Activated CD4-positive, alpha-beta T cell treated with anti-CD3 and anti-CD28 coated beads for 36 hours (primary cell): ENCODE measurements at regions of chr1 and their contacts with region 1.

Region 1: GRCh38 chr1:8423650-8424538 is 106.0 kb downstream of the SLC45A1 start:
- DNase-seq: peak; percentile 77
- ATAC-seq: peak; percentile 66
- H3K4me3 Mint-ChIP-seq: peak overlapping the region; percentile 84
- H3K27ac Mint-ChIP-seq: peak overlapping the region; percentile 97
- H3K4me1 Mint-ChIP-seq: peaks cover 42% of the 10 kb centered on the region
- H3K27me3 Mint-ChIP-seq: no peaks in the 10 kb centered on the region

Region 2: GRCh38 chr1:8389981-8390535 is 33.8 kb before region 1 on chr1:
- CTCF ChIA-PET with region 1: interaction called, 4 read pairs
- POLR2A ChIA-PET with region 1: no interaction called
- intact Hi-C with region 1: loop called in 1 of 2 experiments (anchors 5 kb)
- DNase-seq: peak; percentile 69
- ATAC-seq: peak; percentile 91
- H3K4me3 Mint-ChIP-seq: no peak overlapping the region
- H3K27ac Mint-ChIP-seq: peak overlapping the region; percentile 58
- H3K4me1 Mint-ChIP-seq: peaks cover 81% of the 10 kb centered on the region
- H3K27me3 Mint-ChIP-seq: no peaks in the 10 kb centered on the region

Region 3: GRCh38 chr1:8396786-8397406 is 27.0 kb before region 1 on chr1:
- CTCF ChIA-PET with region 1: interaction called, 3 read pairs
- POLR2A ChIA-PET with region 1: interaction called, 5 read pairs
- intact Hi-C with region 1: loop called (anchors 1 to 2 kb)
- DNase-seq: peak; percentile 68
- ATAC-seq: peak; percentile 84
- H3K4me3 Mint-ChIP-seq: peak overlapping the region; percentile 25
- H3K27ac Mint-ChIP-seq: peak overlapping the region; percentile 81
- H3K4me1 Mint-ChIP-seq: peaks cover 72% of the 10 kb centered on the region
- H3K27me3 Mint-ChIP-seq: no peaks in the 10 kb centered on the region

Region 4: GRCh38 chr1:8409106-8409505 is 14.8 kb before region 1 on chr1:
- CTCF ChIA-PET with region 1: interaction called, 34 read pairs
- POLR2A ChIA-PET with region 1: interaction called, 4 read pairs
- intact Hi-C with region 1: no loop called
- DNase-seq: peak; percentile 23
- ATAC-seq: peak; percentile 69
- H3K4me3 Mint-ChIP-seq: peak overlapping the region; percentile 33
- H3K27ac Mint-ChIP-seq: peak overlapping the region; percentile 77
- H3K4me1 Mint-ChIP-seq: peaks cover 61% of the 10 kb centered on the region
- H3K27me3 Mint-ChIP-seq: no peaks in the 10 kb centered on the region

Region 5: GRCh38 chr1:8477166-8477982 is 53.5 kb after region 1 on chr1:
- CTCF ChIA-PET with region 1: interaction called, 3 read pairs
- POLR2A ChIA-PET with region 1: no interaction called
- intact Hi-C with region 1: loop called (anchors 2 to 5 kb)
- DNase-seq: peak; percentile 45
- ATAC-seq: peak; percentile 77
- H3K4me3 Mint-ChIP-seq: no peak overlapping the region
- H3K27ac Mint-ChIP-seq: peak overlapping the region; percentile 85
- H3K4me1 Mint-ChIP-seq: peaks cover 49% of the 10 kb centered on the region
- H3K27me3 Mint-ChIP-seq: no peaks in the 10 kb centered on the region

Region 6: DNA sequence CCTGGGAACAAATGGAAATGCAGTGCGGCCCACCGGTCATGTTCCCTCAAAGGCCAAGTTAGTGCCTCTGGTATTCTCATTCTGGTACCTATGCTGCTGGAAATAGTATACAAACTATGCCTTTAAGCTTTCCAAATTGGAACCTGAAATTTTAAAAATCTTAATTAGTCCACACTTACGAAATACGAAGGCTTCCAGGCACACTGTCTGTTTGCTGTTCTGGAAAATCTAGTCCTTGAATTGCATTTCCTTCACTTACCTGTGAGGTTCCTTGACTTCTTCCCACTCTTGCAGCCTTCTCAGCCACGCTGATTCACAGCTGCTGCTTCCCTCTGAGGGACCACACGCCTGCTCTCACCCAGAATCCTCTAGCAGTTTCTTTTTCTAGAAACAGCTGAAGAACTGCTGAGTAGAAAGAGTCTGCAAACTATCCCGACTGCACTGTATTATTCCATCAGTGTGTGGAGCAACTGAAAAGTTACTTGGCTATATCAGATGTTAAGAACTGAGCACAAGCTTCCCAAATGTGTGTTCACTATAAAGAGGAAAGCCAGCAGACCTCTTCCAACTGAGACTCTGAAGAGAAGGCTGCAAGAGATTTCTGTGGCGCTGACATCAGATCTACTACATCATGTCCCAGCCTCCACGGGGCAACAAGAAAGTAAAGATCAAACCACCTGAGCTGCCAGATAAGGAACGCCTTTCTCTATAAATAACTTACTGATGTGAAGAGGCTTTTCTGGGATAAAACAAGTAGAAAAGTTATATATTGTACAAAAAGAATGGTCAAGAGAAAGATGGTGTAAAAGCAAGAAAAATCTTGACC is 166.8 kb after region 1 on chr1:
- CTCF ChIA-PET with region 1: no interaction called
- POLR2A ChIA-PET with region 1: no interaction called
- intact Hi-C with region 1: no loop called
- DNase-seq: no peak
- ATAC-seq: peak; percentile 47
- H3K4me3 Mint-ChIP-seq: no peak overlapping the region
- H3K27ac Mint-ChIP-seq: peak overlapping the region; percentile 39
- H3K4me1 Mint-ChIP-seq: peaks cover 42% of the 10 kb centered on the region
- H3K27me3 Mint-ChIP-seq: no peaks in the 10 kb centered on the region